Panc1 (cell line): ENCODE measurements at regions of chr15 and their contacts with region 1.

Region 1: GRCh38 chr15:89057504-89058133 is 30.6 kb upstream of the ABHD2 start:
- DNase-seq: peak; percentile 62
- ATAC-seq: peak; percentile 90
- H3K4me3 ChIP-seq: no peak overlapping the region
- H3K27ac ChIP-seq: peak overlapping the region; percentile 29; the same call in 1 of the 2 replicates
- H3K4me1 ChIP-seq: peaks cover 4% of the 10 kb centered on the region; the same call in 1 of the 2 replicates
- H3K27me3 ChIP-seq: no peaks in the 10 kb centered on the region
- CTCF ChIP-seq: peak; percentile 99

Region 2: DNA sequence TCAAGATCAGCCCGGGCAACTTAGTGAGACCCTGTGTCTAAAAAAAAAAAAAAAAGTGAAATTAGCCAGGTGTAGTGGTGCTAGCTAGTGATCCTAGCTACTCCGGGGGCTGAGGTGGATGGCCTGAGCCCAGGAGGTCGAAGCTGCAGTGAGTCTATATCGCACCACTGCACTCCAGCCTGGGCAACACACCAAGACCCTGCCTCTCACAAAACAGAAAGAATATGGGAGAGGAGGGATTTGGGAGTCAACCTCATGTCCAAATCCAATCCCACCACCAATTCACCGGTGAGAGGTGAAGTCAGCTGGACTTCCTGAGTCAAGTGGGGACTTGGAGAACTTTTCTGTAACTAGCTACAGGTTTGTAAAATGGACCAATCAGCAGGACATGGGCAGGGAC is 64.0 kb before region 1 on chr15:
- CTCF ChIA-PET with region 1: interaction called, 10 read pairs
- POLR2A ChIA-PET with region 1: no interaction called
- in situ Hi-C with region 1: no loop called
- intact Hi-C with region 1: no loop called
- DNase-seq: no peak
- ATAC-seq: no peak
- H3K4me3 ChIP-seq: no peak overlapping the region
- H3K27ac ChIP-seq: peak overlapping the region; percentile 98
- H3K4me1 ChIP-seq: peaks cover 31% of the 10 kb centered on the region
- H3K27me3 ChIP-seq: no peaks in the 10 kb centered on the region
- CTCF ChIP-seq: no peak

Region 3: DNA sequence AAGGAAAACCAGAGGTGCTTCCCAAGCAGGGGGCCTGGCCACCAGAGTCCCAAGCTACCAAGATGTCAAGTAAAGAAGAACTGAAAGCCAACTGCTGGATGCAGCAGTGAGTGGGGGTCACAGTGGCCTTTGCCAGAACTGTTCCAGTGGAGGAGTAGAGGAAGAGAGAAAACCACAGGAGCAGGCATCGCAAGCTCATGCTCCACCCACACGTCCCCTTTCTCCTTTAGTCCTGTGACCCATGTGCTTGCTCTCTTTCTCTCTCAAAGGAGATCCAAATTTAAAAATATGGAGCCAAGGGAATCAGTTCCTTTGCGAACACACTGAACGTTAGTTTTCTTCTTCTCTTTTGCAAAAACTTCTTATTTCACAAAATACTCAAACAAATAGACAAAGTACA is 18.2 kb after region 1 on chr15:
- CTCF ChIA-PET with region 1: no interaction called
- POLR2A ChIA-PET with region 1: no interaction called
- in situ Hi-C with region 1: no loop called
- intact Hi-C with region 1: no loop called
- DNase-seq: no peak
- ATAC-seq: no peak
- H3K4me3 ChIP-seq: no peak overlapping the region
- H3K27ac ChIP-seq: no peak overlapping the region
- H3K4me1 ChIP-seq: no peaks in the 10 kb centered on the region
- H3K27me3 ChIP-seq: no peaks in the 10 kb centered on the region; the same call in 1 of the 2 replicates
- CTCF ChIP-seq: no peak

Region 4: GRCh38 chr15:89129123-89129815 is 71.7 kb after region 1 on chr15:
- CTCF ChIA-PET with region 1: interaction called, 4 read pairs
- POLR2A ChIA-PET with region 1: no interaction called
- in situ Hi-C with region 1: no loop called
- intact Hi-C with region 1: loop called (anchors 5 kb)
- DNase-seq: peak; percentile 28
- ATAC-seq: peak; percentile 80
- H3K4me3 ChIP-seq: no peak overlapping the region
- H3K27ac ChIP-seq: no peak overlapping the region
- H3K4me1 ChIP-seq: peaks cover 4% of the 10 kb centered on the region; the same call in 1 of the 2 replicates
- H3K27me3 ChIP-seq: no peaks in the 10 kb centered on the region
- CTCF ChIP-seq: peak; percentile 94

Region 5: DNA sequence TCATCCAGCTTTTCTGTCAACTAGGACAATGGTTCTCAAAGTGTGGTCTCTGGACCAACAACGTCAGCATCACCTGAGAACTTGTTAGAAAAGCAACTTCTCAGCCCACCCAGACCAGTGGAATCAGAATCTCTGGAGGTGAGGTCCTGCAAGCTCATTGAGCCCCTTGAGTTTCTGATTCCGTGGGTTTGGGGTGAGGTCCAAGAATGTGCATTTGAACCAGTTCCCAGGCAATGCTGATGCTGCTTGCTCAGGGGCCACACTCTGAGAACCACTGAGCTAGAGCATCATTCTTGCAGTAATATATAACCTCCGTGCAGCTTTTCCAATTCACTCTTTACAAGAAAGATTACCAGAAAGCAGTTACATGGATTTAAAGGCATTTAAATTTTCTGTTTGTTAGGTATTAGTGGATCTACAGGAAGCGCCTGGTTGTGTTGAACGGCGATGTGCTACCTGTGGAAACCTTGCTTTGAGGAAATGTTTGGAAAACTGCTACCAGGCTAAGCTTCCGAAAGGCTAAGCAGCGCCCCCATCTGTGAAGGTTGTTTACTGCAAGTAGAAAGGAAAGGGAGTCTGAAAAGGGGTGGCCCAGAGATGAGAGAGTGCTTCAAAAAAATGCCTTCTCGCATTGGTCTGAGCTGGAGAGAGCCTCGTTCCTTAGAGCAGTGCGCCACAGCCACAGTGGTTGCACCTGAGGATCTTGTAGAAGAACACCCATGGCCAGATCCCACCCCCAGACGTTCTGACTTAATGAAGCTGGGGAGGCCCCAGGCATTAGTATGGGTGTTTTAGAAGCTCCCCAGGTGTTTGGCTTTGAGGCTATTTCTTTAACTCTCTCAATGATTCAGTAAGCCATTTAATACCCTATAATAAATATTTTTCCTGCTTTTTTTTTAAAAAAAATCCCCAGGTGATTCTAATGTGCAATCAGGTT is 113.8 kb after region 1 on chr15:
- CTCF ChIA-PET with region 1: interaction called, 13 read pairs
- POLR2A ChIA-PET with region 1: no interaction called
- in situ Hi-C with region 1: no loop called
- intact Hi-C with region 1: loop called (anchors 2 kb)
- DNase-seq: peak; percentile 12
- ATAC-seq: peak; percentile 56
- H3K4me3 ChIP-seq: no peak overlapping the region
- H3K27ac ChIP-seq: no peak overlapping the region
- H3K4me1 ChIP-seq: peaks cover 10% of the 10 kb centered on the region
- H3K27me3 ChIP-seq: no peaks in the 10 kb centered on the region
- CTCF ChIP-seq: peak; percentile 91

Region 6: DNA sequence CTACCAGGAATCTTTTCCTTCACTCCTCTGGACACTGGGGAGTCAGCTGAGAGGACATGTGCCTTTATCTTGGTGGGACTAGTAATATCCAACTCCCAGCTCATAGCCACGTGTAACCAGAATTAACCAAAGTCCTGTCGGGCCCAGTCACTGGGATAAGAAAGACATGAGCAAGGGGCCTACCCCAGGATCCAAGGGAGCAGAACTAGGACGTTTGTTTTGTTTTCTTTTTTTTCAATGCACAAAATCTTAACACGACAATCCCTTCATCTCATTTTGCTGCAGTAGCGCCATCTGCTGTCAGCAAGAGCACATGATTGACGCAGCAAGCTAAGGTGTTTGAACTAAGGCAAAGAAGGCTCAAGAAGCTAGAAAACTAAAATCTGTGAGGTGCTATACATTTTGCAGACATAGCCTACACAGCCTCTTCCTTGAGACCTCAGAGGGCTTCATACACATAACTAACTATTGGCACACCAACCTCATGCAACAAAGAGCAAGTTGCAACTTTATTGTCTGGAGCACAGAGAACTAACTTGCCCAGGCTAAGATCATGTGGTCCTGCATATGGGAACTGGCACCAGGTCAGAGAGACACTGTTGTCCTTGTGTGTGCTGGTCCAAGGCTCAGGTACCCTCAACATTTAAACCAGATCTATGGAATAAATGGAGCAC is 120.2 kb after region 1 on chr15:
- CTCF ChIA-PET with region 1: interaction called, 16 read pairs
- POLR2A ChIA-PET with region 1: no interaction called
- in situ Hi-C with region 1: no loop called
- intact Hi-C with region 1: loop called (anchors 2 kb)
- DNase-seq: peak; percentile 36
- ATAC-seq: peak; percentile 80
- H3K4me3 ChIP-seq: no peak overlapping the region
- H3K27ac ChIP-seq: no peak overlapping the region; the same call in none of the 2 replicates
- H3K4me1 ChIP-seq: no peaks in the 10 kb centered on the region
- H3K27me3 ChIP-seq: no peaks in the 10 kb centered on the region
- CTCF ChIP-seq: peak; percentile 91